Caco-2 (cell line): ENCODE measurements at regions of chr15 and their contacts with region 1.

Region 1: GRCh38 chr15:41972253-41973242 is at the start of gene EHD4:
- DNase-seq: peak; percentile 97 to 98
- H3K4me3 ChIP-seq: peak within 1 kb of the TSS; percentile 68
- H3K4me3 Mint-ChIP-seq: peak within 1 kb of the TSS; percentile 88
- H3K27ac Mint-ChIP-seq: peak within 1 kb of the TSS; percentile 96
- H3K4me1 ChIP-seq: peaks cover 34% of the 10 kb centered on the region
- H3K4me1 Mint-ChIP-seq: peaks cover 32% of the 10 kb centered on the region
- H3K27me3 ChIP-seq: no peaks in the 10 kb centered on the region
- H3K27me3 Mint-ChIP-seq: no peaks in the 10 kb centered on the region
- CTCF ChIP-seq: peak; percentile 41 to 59
- total RNA-seq, gene EHD4: 31.6 TPM in 2 replicates

Region 2: DNA sequence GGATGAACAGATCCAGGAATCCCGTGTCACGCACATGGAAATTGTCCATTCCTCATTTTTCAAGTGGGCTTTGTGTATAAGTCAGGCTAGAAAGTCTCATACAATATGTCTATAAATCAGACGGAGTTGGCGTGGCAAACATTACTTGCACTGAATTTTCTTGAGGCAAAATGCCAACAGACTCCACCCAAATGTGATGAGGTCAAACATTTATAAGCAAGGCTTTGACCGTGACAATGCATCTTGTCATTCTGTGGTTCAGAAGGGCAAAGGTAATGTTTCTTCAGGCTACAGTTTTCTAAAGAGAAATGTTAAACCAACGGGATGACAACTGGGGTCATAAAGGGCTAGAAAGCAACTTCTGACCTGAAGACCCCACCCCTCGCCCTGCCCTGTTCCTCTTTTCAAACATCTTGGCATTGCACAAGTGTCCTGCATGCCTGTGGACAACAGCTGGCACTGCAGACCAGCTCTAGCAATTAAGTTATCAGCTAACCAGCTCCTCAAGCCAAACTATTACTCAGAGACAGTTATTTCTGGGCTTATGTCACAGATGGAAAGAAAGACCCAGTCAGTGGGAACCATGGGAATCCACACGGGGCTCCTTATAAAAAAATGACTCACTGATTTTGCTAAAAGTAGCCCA is 42.2 kb before region 1 on chr15:
- CTCF ChIA-PET with region 1: interaction called, 15 read pairs
- POLR2A ChIA-PET with region 1: interaction called, 4 read pairs
- intact Hi-C with region 1: loop called (anchors 5 kb)
- DNase-seq: peak; percentile 53 to 61
- H3K4me3 ChIP-seq: no peak overlapping the region
- H3K4me3 Mint-ChIP-seq: no peak overlapping the region
- H3K27ac Mint-ChIP-seq: no peak overlapping the region
- H3K4me1 ChIP-seq: peaks cover 61% of the 10 kb centered on the region
- H3K4me1 Mint-ChIP-seq: peaks cover 62% of the 10 kb centered on the region
- H3K27me3 ChIP-seq: no peaks in the 10 kb centered on the region
- H3K27me3 Mint-ChIP-seq: no peaks in the 10 kb centered on the region
- CTCF ChIP-seq: peak in 1 of 2 experiments; percentile 12

Region 3: GRCh38 chr15:41944313-41944940 is 28.1 kb before region 1 on chr15:
- CTCF ChIA-PET with region 1: interaction called, 8 read pairs
- POLR2A ChIA-PET with region 1: interaction called, 6 read pairs
- intact Hi-C with region 1: loop called (anchors 1 kb)
- DNase-seq: peak; percentile 59 to 64
- H3K4me3 ChIP-seq: no peak overlapping the region
- H3K4me3 Mint-ChIP-seq: peak overlapping the region; percentile 47
- H3K27ac Mint-ChIP-seq: peak overlapping the region; percentile 82
- H3K4me1 ChIP-seq: peaks cover 53% of the 10 kb centered on the region
- H3K4me1 Mint-ChIP-seq: peaks cover 36% of the 10 kb centered on the region
- H3K27me3 ChIP-seq: no peaks in the 10 kb centered on the region
- H3K27me3 Mint-ChIP-seq: no peaks in the 10 kb centered on the region
- CTCF ChIP-seq: no peak

Region 4: GRCh38 chr15:41957021-41957897 is 15.3 kb before region 1 on chr15:
- CTCF ChIA-PET with region 1: no interaction called
- POLR2A ChIA-PET with region 1: interaction called, 11 read pairs
- intact Hi-C with region 1: loop called (anchors 1 kb)
- DNase-seq: no peak
- H3K4me3 ChIP-seq: no peak overlapping the region
- H3K4me3 Mint-ChIP-seq: no peak overlapping the region
- H3K27ac Mint-ChIP-seq: peak overlapping the region; percentile 75
- H3K4me1 ChIP-seq: peaks cover 34% of the 10 kb centered on the region
- H3K4me1 Mint-ChIP-seq: peaks cover 30% of the 10 kb centered on the region
- H3K27me3 ChIP-seq: no peaks in the 10 kb centered on the region
- H3K27me3 Mint-ChIP-seq: no peaks in the 10 kb centered on the region
- CTCF ChIP-seq: no peak

Region 5: GRCh38 chr15:42056934-42057779 is 84.6 kb after region 1 on chr15:
- CTCF ChIA-PET with region 1: interaction called, 14 read pairs
- POLR2A ChIA-PET with region 1: no interaction called
- intact Hi-C with region 1: loop called (anchors 1 kb)
- DNase-seq: peak; percentile 92 to 96
- H3K4me3 ChIP-seq: peak overlapping the region; percentile 33
- H3K4me3 Mint-ChIP-seq: peak overlapping the region; percentile 76
- H3K27ac Mint-ChIP-seq: peak overlapping the region; percentile 93
- H3K4me1 ChIP-seq: peaks cover 19% of the 10 kb centered on the region
- H3K4me1 Mint-ChIP-seq: peaks cover 7% of the 10 kb centered on the region
- H3K27me3 ChIP-seq: no peaks in the 10 kb centered on the region
- H3K27me3 Mint-ChIP-seq: no peaks in the 10 kb centered on the region
- CTCF ChIP-seq: peak; percentile 73 to 87

Region 6: GRCh38 chr15:42273102-42273899 is 300.8 kb after region 1 on chr15 and contains the starts of genes GANC and TMEM87A:
- CTCF ChIA-PET with region 1: no interaction called
- POLR2A ChIA-PET with region 1: no interaction called
- intact Hi-C with region 1: loop called (anchors 5 kb)
- DNase-seq: peak; percentile 96 to 98
- H3K4me3 ChIP-seq: peak within 1 kb of the TSS; percentile 75
- H3K4me3 Mint-ChIP-seq: peak within 1 kb of the TSS; percentile 83
- H3K27ac Mint-ChIP-seq: peak within 1 kb of the TSS; percentile 99
- H3K4me1 ChIP-seq: peaks cover 30% of the 10 kb centered on the region
- H3K4me1 Mint-ChIP-seq: peaks cover 15% of the 10 kb centered on the region
- H3K27me3 ChIP-seq: no peaks in the 10 kb centered on the region
- H3K27me3 Mint-ChIP-seq: no peaks in the 10 kb centered on the region
- CTCF ChIP-seq: no peak
- total RNA-seq, gene GANC: 11.8 and 12.6 TPM in 2 replicates
- total RNA-seq, gene TMEM87A: 33.6 and 38.4 TPM in 2 replicates